Heart right ventricle (tissue), 16 donors: ENCODE measurements at regions of chr2 and their contacts with region 1.

Region 1: DNA sequence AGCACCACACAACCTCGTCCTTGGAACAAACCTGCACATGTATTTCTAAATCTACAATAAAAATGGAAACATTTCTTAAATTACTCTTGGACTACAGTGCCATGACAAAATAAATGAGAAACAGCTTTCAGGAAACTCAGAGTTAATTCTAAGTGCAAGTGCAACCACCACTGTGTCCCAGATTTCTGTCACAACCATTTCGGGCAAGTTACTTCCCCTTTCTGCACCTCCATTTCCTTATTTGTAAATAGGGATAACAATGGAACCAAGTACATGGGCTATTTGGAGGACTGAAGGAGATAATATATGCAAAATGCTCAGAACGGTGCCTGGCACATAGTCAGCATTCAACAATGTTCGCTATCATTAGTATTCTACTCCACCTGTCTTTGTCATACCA is 93.2 kb downstream of the CACNB4 start:
- DNase-seq: no peak
- ATAC-seq: no peak
- H3K4me3 ChIP-seq: no peak overlapping the region
- H3K27ac ChIP-seq: no peak overlapping the region
- H3K4me1 ChIP-seq: peaks cover 0 to 15% (median 0%) of the 10 kb centered on the region in 9 donors
- H3K27me3 ChIP-seq: no peaks in the 10 kb centered on the region
- CTCF ChIP-seq: no peak

Region 2: DNA sequence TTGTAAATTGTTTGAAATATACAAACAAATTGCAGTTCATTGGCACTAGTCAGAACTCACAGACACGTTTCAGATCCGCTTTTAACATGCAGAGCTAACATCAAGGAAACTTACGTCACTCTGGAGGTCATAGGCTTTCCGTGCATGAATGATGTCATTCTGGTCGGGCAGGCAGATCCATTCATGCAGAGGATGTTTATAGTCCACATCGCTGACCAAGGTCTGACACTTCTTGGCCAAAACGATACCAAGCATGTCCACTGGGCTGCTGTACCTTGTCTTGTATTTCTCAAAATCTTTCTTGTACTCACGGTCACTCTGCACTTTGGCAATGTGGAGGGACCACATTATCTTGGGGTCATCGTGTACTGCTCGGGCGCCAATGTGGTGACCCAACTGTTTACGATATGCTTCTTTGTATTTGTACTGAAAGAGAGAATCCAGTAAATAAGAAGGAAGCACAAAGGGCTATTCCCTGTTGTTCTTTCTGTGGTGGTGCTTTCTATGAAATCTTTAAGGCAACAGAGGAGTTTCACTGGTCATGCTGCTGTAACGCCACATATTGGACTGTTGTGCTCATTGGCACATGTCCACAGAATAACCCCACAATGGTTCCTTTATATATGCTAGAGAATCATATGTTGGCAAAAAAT is 386.1 kb before region 1 on chr2:
- intact Hi-C with region 1: loop called in 1 of 10 experiments (anchors 10 kb)
- DNase-seq: no peak
- ATAC-seq: peak in 2 of 8 donors; percentile 27 to 73
- H3K4me3 ChIP-seq: no peak overlapping the region
- H3K27ac ChIP-seq: no peak overlapping the region
- H3K4me1 ChIP-seq: peaks cover 0 to 11% (median 0%) of the 10 kb centered on the region in 9 donors
- H3K27me3 ChIP-seq: no peaks in the 10 kb centered on the region
- CTCF ChIP-seq: no peak

Region 3: DNA sequence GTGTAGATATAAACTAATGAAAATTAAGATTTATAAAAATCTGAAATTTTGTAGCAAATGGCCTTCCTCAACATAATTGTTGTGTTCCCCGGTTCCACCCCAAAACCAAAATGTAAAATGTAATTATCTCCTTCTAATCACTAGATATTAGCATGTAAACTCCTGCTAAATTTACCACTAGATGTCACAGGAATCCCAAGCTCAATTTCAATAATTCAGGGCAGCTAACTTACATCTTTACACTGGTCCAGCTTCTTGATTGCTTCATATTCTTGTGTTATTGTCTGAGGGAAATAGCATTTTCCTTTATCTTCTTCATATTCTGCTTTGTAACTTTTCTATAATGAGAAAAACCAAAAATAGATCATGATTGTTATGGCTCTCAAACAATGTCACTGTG is 314.0 kb before region 1 on chr2:
- intact Hi-C with region 1: loop called in 1 of 10 experiments (anchors 10 kb)
- DNase-seq: no peak
- ATAC-seq: no peak
- H3K4me3 ChIP-seq: no peak overlapping the region
- H3K27ac ChIP-seq: no peak overlapping the region
- H3K4me1 ChIP-seq: no peaks in the 10 kb centered on the region
- H3K27me3 ChIP-seq: no peaks in the 10 kb centered on the region
- CTCF ChIP-seq: peak in 4 of 9 donors; percentile 10 to 40 (median 31)

Region 4: GRCh38 chr2:151833984-151834383 is 171.6 kb before region 1 on chr2:
- intact Hi-C with region 1: loop called in 5 of 10 experiments (anchors 10 kb)
- DNase-seq: no peak
- ATAC-seq: no peak
- H3K4me3 ChIP-seq: no peak overlapping the region
- H3K27ac ChIP-seq: no peak overlapping the region
- H3K4me1 ChIP-seq: peaks cover 0 to 12% (median 4%) of the 10 kb centered on the region in 9 donors
- H3K27me3 ChIP-seq: no peaks in the 10 kb centered on the region
- CTCF ChIP-seq: no peak